Posterior cingulate gyrus (tissue), 11 donors: ENCODE measurements at regions of chr14 and their contacts with region 1.

Region 1: DNA sequence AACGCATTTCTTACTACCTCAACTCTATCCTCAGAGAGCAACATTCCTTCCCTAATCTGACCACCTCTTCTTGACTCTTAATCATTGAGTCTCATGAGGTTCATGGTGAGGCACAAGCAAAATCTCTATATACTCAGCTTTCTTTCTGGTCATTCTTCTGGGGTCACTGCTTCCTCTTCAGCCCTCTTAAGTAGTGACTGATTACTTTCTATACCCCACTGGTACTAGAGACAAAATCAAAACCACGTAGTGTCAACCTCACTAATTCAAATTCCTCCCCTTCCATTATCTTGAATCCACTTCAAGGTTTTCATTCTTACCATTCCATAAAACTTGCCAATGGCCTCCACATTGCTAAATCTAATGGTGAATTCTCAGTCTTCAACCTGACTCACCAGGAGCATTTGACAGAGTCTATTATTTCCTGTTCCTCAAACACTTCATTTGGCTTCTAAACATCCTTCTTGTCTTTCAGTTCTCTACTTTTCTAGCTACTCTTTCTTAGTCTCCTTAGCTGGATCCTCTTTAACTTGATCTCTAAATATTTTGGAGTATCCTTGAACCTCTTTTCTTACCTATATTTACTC is 6.8 kb downstream of the WDHD1 start:
- DNase-seq: no peak

Region 2: DNA sequence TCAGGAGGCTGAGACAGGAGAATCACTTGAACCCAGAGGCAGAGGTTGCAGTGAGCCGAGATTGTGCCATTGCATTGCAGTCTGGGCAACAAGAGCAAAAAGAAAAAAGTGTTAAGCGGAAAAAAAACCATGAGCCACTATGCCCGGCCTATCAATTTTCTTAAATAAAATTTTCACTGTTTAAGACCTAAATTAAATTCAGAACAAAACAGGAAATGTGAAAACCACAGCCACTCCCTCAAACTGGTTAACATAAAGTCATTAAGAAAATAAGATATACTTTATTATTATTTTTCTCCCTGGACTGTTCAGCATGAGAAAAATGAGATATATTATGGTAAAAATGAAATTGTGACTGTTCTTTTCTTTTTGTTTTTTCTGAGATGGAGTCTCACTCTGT is 72.8 kb before region 1 on chr14:
- intact Hi-C with region 1: no loop called
- DNase-seq: no peak

Region 3: DNA sequence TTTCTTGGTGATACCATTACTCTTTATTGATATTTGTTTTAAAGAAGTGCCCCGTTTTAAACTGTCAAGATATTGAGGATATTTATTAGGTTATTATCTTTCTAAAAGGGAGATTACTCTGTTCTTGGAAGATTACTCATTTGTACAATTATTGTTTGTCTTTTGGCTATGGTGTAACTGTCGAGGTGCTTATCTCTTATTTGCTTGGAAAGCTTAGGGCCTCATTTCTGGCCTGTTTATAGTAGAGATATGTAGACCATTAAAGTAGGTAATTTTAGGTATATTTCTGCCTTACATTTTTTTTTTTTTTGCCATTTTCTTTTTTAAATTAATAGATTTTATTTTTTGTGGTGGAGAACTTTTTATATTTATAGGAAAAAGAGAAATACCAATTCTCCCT is 634.2 kb after region 1 on chr14:
- intact Hi-C with region 1: loop called (anchors 10 kb)
- DNase-seq: no peak